B cell (primary cell): ENCODE measurements at regions of chr17 and their contacts with region 1.

Region 1: GRCh38 chr17:48261297-48261880 is 153.8 kb downstream of the SNX11 start:
- DNase-seq: no peak
- ATAC-seq: no peak
- H3K4me3 ChIP-seq: no peak overlapping the region
- H3K4me3 Mint-ChIP-seq: no peak overlapping the region
- H3K27ac ChIP-seq: no peak overlapping the region
- H3K27ac Mint-ChIP-seq: no peak overlapping the region
- H3K4me1 ChIP-seq: no peaks in the 10 kb centered on the region
- H3K4me1 Mint-ChIP-seq: no peaks in the 10 kb centered on the region
- H3K27me3 ChIP-seq: no peaks in the 10 kb centered on the region
- H3K27me3 Mint-ChIP-seq: no peaks in the 10 kb centered on the region
- CTCF ChIP-seq: peak; percentile 30

Region 2: DNA sequence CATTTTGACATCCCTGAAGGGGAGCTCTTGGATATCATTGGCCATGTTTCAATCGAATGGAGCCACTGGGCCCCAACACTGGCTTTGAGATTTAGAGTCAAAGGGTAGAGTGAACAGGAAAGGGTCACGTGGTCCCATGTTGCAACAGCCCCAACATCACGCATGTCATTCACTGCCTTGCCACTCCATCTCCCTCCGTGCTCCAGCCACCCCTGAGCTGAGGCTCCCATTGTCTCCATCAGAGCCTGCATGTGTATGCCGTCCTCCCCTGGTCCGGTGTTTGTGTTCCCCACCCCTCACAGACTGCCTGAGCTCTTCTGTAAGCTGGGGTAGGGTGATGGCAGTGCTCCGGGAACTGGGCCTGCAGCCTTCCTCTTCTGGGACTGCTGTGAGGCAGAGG is 201.1 kb before region 1 on chr17:
- CTCF ChIA-PET with region 1: no interaction called
- POLR2A ChIA-PET with region 1: no interaction called
- intact Hi-C with region 1: no loop called
- DNase-seq: no peak
- ATAC-seq: no peak
- H3K4me3 ChIP-seq: no peak overlapping the region
- H3K4me3 Mint-ChIP-seq: no peak overlapping the region
- H3K27ac ChIP-seq: no peak overlapping the region
- H3K27ac Mint-ChIP-seq: no peak overlapping the region
- H3K4me1 ChIP-seq: peaks cover 12 to 15% of the 10 kb centered on the region in 2 donors
- H3K4me1 Mint-ChIP-seq: peaks cover 15% of the 10 kb centered on the region
- H3K27me3 ChIP-seq: no peaks in the 10 kb centered on the region
- H3K27me3 Mint-ChIP-seq: no peaks in the 10 kb centered on the region
- CTCF ChIP-seq: no peak

Region 3: DNA sequence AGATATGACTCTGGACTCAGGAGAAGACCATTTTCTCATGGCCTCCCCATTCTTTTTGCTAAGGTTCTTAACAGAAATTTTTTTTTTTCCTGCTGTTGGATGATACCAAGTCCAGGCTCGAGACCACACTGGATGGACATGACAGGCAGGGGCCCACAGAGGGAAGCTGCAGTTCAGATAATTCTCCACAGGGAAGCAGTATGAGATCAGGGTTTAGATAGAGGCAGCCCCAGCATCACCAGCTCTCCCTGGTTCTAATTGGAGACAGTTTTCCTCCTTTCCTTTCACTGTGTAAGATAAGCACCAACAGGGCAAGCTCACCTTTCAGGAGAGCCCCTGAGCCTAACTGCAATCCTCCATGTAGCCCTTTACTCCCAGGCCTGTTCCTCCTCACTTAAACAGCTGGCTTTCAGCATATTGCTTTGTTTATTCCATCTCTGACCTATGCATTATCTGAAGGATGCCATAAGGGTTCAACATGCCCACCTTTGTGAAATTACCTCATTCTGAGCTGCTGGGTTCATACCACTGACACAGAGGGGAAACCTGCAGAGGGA is 45.7 kb before region 1 on chr17:
- CTCF ChIA-PET with region 1: no interaction called
- POLR2A ChIA-PET with region 1: no interaction called
- intact Hi-C with region 1: no loop called
- DNase-seq: no peak
- ATAC-seq: no peak
- H3K4me3 ChIP-seq: no peak overlapping the region
- H3K4me3 Mint-ChIP-seq: no peak overlapping the region
- H3K27ac ChIP-seq: no peak overlapping the region
- H3K27ac Mint-ChIP-seq: no peak overlapping the region
- H3K4me1 ChIP-seq: no peaks in the 10 kb centered on the region
- H3K4me1 Mint-ChIP-seq: no peaks in the 10 kb centered on the region
- H3K27me3 ChIP-seq: no peaks in the 10 kb centered on the region
- H3K27me3 Mint-ChIP-seq: no peaks in the 10 kb centered on the region
- CTCF ChIP-seq: no peak

Region 4: GRCh38 chr17:48618256-48618897 is 357.0 kb after region 1 on chr17:
- CTCF ChIA-PET with region 1: interaction called, 21 read pairs
- POLR2A ChIA-PET with region 1: no interaction called
- intact Hi-C with region 1: loop called (anchors 1 kb)
- DNase-seq: peak; percentile 87
- ATAC-seq: peak; percentile 71
- H3K4me3 ChIP-seq: no peak overlapping the region
- H3K4me3 Mint-ChIP-seq: no peak overlapping the region
- H3K27ac ChIP-seq: no peak overlapping the region
- H3K27ac Mint-ChIP-seq: peak overlapping the region; percentile 74
- H3K4me1 ChIP-seq: peaks cover 33 to 51% of the 10 kb centered on the region in 2 donors
- H3K4me1 Mint-ChIP-seq: peaks cover 28% of the 10 kb centered on the region
- H3K27me3 ChIP-seq: peaks cover 0 to 97% (median 72%) of the 10 kb centered on the region in 4 experiments
- H3K27me3 Mint-ChIP-seq: peaks cover 86% of the 10 kb centered on the region
- CTCF ChIP-seq: peak; percentile 97